Sigmoid colon (tissue), 7 donors: ENCODE measurements at regions of chr14 and their contacts with region 1.

Region 1: DNA sequence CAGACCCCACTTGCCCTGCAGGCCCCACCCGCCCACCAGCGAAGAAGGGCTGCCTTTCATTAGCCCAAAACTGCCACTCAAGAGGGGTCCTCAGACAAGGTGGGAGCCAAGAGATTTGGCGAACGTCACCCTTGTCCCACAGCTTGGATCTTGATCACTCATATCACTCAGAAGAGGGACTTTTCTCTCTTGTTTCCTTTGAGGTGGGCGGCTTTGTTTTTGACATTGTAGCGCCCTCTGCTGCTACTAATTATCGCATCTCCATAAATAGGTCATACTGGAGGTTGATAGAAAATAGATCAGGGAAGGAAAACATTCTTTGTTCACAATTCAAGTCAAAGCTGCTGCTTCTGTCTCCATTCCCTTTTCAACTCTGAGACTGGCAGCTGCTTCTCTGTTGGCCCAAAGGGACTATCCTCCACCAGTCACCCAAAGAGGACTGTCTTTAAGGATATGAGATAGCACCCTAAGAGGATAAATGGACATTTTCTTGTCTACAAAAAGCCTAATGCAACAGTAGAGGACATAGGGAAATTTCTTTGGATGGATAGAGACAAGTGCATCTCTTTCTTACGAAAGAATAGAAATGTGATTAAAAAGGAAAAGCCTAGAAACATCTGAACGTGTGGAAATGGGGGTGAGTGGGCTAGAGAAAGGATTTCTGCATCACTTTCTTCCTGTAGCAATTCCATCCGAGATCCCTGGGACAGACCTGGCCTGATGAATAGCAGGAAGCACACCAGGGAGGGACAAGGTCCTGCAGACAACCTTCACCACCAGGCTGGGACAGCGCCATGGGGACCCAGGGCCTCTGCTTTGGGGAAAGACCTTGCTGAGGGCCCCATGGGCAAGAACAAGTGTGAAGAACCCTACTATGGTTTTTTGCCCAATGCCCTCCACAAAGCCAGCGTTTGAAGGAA is 115.8 kb downstream of the DAD1 start:
- DNase-seq: no peak
- H3K4me3 ChIP-seq: no peak overlapping the region
- H3K27ac ChIP-seq: no peak overlapping the region
- H3K4me1 ChIP-seq: peaks cover 0 to 27% (median 11%) of the 10 kb centered on the region in 4 donors
- H3K27me3 ChIP-seq: no peaks in the 10 kb centered on the region
- CTCF ChIP-seq: peak; percentile 28 to 57 (median 43)
- EP300 ChIP-seq: no peak
- POLR2A ChIP-seq: no peak

Region 2: GRCh38 chr14:22314181-22314820 is 158.9 kb before region 1 on chr14:
- intact Hi-C with region 1: loop called (anchors 10 kb)
- DNase-seq: no peak
- H3K4me3 ChIP-seq: no peak overlapping the region
- H3K27ac ChIP-seq: no peak overlapping the region
- H3K4me1 ChIP-seq: peaks cover 0 to 6% (median 0%) of the 10 kb centered on the region in 4 donors
- H3K27me3 ChIP-seq: no peaks in the 10 kb centered on the region
- CTCF ChIP-seq: peak in 3 of 4 experiments; percentile 30 to 62 (median 39)
- EP300 ChIP-seq: no peak
- POLR2A ChIP-seq: no peak

Region 3: GRCh38 chr14:22386924-22387775 is 86.0 kb before region 1 on chr14:
- intact Hi-C with region 1: loop called (anchors 1 kb)
- DNase-seq: peak; percentile 85
- H3K4me3 ChIP-seq: no peak overlapping the region
- H3K27ac ChIP-seq: no peak overlapping the region
- H3K4me1 ChIP-seq: peaks cover 0 to 9% (median 2%) of the 10 kb centered on the region in 4 donors
- H3K27me3 ChIP-seq: peaks cover 0 to 9% (median 0%) of the 10 kb centered on the region in 3 donors
- CTCF ChIP-seq: peak; percentile 58 to 82 (median 75)
- EP300 ChIP-seq: no peak
- POLR2A ChIP-seq: no peak